Keratinocyte (primary cell): ENCODE measurements at regions of chr17 and their contacts with region 1.

Region 1: DNA sequence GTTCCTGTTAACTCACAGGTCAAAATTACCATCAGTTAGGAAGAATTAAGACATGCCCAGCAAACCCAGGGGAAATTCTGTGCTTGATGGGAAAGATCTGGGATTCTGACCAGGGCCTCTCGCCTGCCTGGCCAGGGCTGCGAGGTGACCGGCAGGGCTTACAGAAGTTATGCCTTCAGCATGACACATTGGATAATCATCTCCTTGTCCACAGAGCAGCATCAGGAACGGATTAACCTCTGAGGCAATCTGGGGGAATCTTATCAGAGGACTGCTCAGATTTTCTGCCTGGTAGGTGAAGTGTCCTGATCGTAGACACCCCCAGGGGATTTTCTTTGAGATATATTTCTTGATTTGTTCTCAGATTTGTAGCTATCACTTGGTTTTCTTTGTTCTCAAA is 172.5 kb downstream of the HS3ST3A1 start:
- DNase-seq: no peak
- H3K4me3 ChIP-seq: no peak overlapping the region
- H3K27ac ChIP-seq: no peak overlapping the region
- H3K4me1 ChIP-seq: no peaks in the 10 kb centered on the region
- H3K27me3 ChIP-seq: no peaks in the 10 kb centered on the region
- CTCF ChIP-seq: no peak

Region 2: DNA sequence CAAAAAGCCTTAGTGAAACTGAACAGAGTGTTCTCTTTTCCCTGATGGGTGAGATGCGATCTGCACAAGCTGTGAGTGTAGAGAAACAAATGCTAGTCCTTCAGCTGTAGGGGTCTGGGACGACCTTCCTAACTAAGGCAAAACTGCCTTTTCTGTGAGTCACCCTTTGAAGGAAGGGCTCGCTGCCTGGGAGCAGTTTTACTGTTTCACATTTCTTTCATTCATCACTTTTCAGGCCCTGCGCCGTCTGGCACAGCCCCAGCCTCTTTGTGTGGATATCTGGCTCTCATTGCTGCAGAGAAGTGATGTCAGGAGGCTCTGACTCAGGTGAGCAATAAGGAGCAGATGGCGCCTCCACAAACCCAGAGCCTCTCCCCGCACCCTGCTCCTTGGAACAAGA is 115.1 kb after region 1 on chr17:
- dilution Hi-C with region 1: loop called (anchors 25 kb)
- DNase-seq: peak; percentile 5
- H3K4me3 ChIP-seq: no peak overlapping the region
- H3K27ac ChIP-seq: no peak overlapping the region
- H3K4me1 ChIP-seq: no peaks in the 10 kb centered on the region
- H3K27me3 ChIP-seq: no peaks in the 10 kb centered on the region
- CTCF ChIP-seq: no peak